AG04449 (cell line): ENCODE measurements at regions of chr1 and their contacts with region 1.

Region 1: GRCh38 chr1:214328770-214329469 is 48.0 kb downstream of the SMYD2 start:
- DNase-seq: no peak
- H3K4me3 ChIP-seq: no peak overlapping the region
- CTCF ChIP-seq: peak; percentile 92

Region 2: DNA sequence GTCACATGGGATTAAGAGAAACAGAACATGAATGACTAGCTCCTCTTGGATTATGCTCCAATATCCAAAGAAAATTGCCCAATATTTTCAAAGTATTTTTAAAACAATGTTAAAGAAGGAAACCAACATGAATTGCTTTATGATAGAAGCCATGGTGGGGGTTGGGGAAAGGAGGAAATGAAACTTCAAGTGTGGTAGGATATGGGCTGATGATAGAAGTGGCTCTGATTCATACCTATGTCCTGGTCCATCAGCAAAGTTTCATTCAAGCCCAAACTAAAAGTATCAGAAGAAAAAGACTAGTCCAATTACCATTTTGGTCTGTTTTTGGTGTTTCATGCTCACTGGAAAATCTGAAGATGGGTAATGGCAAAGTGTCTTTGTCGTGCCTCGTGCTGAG is 445.3 kb before region 1 on chr1:
- CTCF ChIA-PET with region 1: no interaction called
- POLR2A ChIA-PET with region 1: no interaction called
- DNase-seq: no peak
- H3K4me3 ChIP-seq: no peak overlapping the region
- CTCF ChIP-seq: no peak

Region 3: DNA sequence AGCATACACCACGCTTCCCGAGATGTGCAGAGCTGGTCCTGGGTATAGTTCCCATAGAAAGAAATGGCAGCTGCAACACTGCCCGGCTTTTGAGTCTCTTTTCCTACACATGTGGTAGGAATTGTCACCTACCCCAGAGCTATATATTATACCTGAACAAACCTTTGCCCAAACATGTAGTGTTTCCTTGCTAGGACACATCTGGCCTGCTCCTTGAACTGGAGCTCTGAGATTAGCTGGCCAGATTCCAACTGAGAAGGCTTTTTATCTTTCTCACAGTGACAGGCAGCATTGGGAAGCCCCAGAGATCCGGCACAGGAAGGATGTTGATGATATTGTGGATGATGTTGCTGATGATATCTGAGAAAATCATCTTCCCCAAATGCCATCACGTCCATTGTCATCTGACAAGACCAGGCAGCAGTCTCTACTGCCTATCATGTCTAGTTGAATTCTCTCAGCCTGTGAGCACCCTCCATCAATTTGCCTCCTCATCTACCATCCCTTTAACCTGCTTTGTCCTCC is 163.0 kb before region 1 on chr1:
- CTCF ChIA-PET with region 1: no interaction called
- POLR2A ChIA-PET with region 1: no interaction called
- DNase-seq: no peak
- H3K4me3 ChIP-seq: no peak overlapping the region
- CTCF ChIP-seq: no peak

Region 4: GRCh38 chr1:214248311-214249085 is 80.4 kb before region 1 on chr1:
- CTCF ChIA-PET with region 1: interaction called, 16 read pairs
- POLR2A ChIA-PET with region 1: no interaction called
- DNase-seq: no peak
- H3K4me3 ChIP-seq: no peak overlapping the region
- CTCF ChIP-seq: no peak

Region 5: DNA sequence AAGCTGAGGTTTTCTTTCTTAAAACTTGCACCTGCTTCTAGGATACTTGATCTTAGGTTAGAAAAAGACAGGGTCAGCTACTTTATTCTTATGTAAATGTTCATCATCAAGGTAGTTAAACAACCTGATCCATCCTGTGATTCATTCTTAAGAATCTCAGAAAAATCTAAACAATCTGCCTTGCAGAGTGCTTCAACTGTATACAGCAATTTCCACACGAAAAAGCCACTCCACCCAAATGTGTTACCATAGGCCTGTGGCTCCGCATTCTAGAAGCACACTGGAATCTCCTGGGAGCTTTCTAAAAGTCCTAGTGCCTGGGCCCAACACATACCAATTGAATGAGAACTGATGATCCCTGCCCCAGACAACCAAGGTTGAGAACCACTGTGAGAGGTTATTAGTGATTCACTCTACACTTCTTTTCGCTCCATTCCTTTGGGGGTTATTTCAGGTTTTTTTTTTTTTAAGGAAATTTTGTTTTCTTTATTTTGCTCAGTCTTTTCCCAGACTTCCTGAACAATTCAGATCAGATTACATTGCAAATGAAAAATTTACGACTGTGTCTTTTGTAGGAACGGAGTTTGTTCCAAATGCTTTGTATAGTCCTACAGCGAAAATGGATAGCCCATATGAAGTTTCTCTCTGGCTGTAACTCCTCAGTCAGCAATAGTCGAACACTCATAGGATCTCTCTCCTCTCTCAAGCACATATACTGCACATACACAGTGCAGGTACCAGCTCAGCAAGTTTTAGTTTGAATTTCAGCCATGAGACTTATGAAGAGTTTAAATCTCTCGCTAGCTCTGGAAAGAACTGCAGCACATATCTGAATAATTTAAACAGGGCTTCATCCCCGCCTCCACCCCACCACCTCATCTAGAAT is 31.8 kb before region 1 on chr1:
- CTCF ChIA-PET with region 1: interaction called, 105 read pairs
- POLR2A ChIA-PET with region 1: no interaction called
- DNase-seq: peak; percentile 54
- H3K4me3 ChIP-seq: no peak overlapping the region
- CTCF ChIP-seq: no peak

Region 6: GRCh38 chr1:214404154-214404553 is 75.2 kb after region 1 on chr1:
- CTCF ChIA-PET with region 1: interaction called, 19 read pairs
- POLR2A ChIA-PET with region 1: no interaction called
- DNase-seq: no peak
- H3K4me3 ChIP-seq: no peak overlapping the region
- CTCF ChIP-seq: no peak

Region 7: GRCh38 chr1:214573386-214574358 is 244.8 kb after region 1 on chr1:
- CTCF ChIA-PET with region 1: interaction called, 493 read pairs
- POLR2A ChIA-PET with region 1: no interaction called
- DNase-seq: no peak
- H3K4me3 ChIP-seq: no peak overlapping the region
- CTCF ChIP-seq: no peak

Region 8: DNA sequence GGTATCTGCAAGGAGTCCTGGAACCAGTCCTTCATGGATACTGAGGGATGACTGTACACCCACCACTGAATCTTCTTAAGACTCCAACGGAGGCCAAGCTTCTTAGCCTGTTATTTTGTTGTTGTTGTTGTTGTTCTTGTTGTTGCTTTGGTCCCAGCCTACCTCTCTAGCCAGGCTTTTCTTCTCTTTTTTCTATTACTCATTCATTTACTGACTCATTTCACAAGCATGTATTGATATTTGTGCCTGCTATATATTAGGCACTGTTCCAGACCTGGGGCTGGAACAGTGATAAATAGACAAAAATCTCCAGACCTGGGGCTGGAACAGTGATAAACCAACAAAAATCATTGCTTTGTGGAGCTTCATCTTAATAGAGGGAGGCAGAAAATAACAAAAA is 294.5 kb after region 1 on chr1:
- CTCF ChIA-PET with region 1: interaction called, 289 read pairs
- POLR2A ChIA-PET with region 1: no interaction called
- DNase-seq: no peak
- H3K4me3 ChIP-seq: no peak overlapping the region
- CTCF ChIP-seq: no peak